ENCODE measurements at regions of chr6 and their contacts with region 1.

Region 1: GRCh38 chr6:89242574-89243330 is 25.6 kb upstream of the GABRR1 start:
- DNase-seq: peak; percentile 60
- H3K4me3 ChIP-seq: no peak overlapping the region
- H3K27ac ChIP-seq: no peak overlapping the region
- H3K4me1 ChIP-seq: no peaks in the 10 kb centered on the region
- H3K27me3 ChIP-seq: peaks cover 16 to 23% of the 10 kb centered on the region in 2 experiments
- CTCF ChIP-seq: peak; percentile 36 to 43
- POLR2A ChIP-seq: no peak

Region 2: GRCh38 chr6:89122625-89123024 is 120.1 kb before region 1 on chr6:
- CTCF ChIA-PET with region 1: interaction called, 49 read pairs
- POLR2A ChIA-PET with region 1: no interaction called
- dilution Hi-C with region 1: no loop called
- intact Hi-C with region 1: loop called (anchors 1 kb)
- DNase-seq: peak; percentile 52
- H3K4me3 ChIP-seq: no peak overlapping the region
- H3K27ac ChIP-seq: no peak overlapping the region
- H3K4me1 ChIP-seq: peaks cover 2% of the 10 kb centered on the region
- H3K27me3 ChIP-seq: peaks cover 6 to 18% of the 10 kb centered on the region in 2 experiments
- CTCF ChIP-seq: peak in 1 of 2 donors; percentile 31
- POLR2A ChIP-seq: no peak